ENCODE measurements at regions of chr1 and their contacts with region 1.

Region 1: DNA sequence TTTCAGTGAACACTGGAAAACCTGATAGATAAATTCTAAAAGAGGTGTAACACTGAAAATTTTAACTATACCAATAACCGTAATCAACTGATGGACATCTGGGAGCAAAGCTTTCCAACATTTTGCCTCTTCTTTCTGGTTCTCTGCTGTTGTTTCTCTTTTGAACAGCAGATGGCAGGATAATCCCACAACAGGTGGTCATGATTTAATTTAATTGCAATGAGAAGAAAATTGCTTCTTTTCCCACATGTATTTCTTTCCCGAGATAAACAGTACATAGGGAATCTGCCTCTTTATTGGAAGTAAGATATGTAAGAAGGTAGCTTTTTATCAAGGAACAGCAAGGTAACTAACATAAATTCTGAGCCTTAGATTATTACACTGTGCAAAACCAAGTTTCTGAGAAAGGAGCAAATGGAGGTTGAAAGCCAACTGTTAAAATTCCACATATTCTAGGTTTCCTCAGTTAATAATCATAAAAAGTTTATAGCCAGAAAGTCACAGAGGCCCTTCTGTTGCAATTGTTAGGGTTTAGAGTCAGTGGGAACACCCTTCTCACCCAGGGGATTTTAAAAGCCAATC is 72.9 kb downstream of the RPS6KA1 start:
- DNase-seq: peak; percentile 48
- H3K4me3 ChIP-seq: no peak overlapping the region
- H3K27ac ChIP-seq: no peak overlapping the region
- H3K4me1 ChIP-seq: no peaks in the 10 kb centered on the region
- H3K27me3 ChIP-seq: no peaks in the 10 kb centered on the region
- CTCF ChIP-seq: peak; percentile 81 to 82

Region 2: GRCh38 chr1:26677306-26678115 is 75.0 kb after region 1 on chr1:
- CTCF ChIA-PET with region 1: no interaction called
- dilution Hi-C with region 1: no loop called
- in situ Hi-C with region 1: no loop called
- intact Hi-C with region 1: loop called (anchors 1 kb)
- DNase-seq: peak; percentile 91
- H3K4me3 ChIP-seq: no peak overlapping the region
- H3K27ac ChIP-seq: no peak overlapping the region
- H3K4me1 ChIP-seq: peaks cover 4% of the 10 kb centered on the region
- H3K27me3 ChIP-seq: no peaks in the 10 kb centered on the region
- CTCF ChIP-seq: peak; percentile 77 to 90

Region 3: DNA sequence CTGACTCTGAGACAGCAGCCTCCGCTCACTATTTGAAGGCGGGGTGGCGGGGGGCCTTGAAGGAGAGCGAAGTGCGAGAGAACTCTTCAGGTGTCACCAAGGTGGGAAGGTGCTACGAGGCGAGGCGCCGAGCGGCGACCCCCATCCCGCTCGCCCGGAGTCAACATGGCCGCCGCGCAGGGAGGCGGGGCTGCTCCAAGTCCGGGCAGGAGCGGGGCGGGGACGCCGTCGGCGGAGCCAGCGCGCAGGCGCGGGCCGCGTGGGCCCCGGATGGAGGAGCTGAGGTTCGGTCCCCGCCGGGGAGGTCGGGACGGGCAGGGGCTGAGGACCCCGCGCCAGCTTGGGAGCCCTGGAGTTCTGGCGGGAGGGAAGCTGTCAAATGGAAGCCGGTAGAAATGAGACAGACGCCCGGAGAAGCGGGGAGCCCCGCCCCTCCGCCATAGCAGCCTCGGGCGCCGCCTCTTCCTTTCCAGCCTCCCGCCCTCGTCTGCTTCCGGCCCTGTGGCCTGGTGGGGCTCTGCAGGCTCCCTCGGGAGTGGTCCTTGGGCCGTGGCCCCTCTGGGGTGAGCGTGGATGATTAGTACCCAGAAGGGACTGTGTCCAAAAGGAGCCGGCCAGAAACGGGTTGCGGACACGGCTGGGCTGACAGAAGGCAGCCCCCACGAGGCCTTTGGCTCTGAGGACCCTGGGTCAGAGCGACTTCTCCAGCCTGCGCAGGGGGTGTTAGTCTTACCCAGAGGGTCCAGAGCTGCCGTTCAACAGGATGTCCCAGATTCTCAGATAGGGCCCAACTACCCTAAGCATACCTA is 185.4 kb after region 1 on chr1 and contains the start of gene PIGV:
- CTCF ChIA-PET with region 1: interaction called, 8 read pairs
- dilution Hi-C with region 1: loop called (anchors 5 kb)
- in situ Hi-C with region 1: loop called (anchors 5 to 10 kb)
- intact Hi-C with region 1: loop called (anchors 1 kb)
- DNase-seq: peak; percentile 78
- H3K4me3 ChIP-seq: peak within 1 kb of the TSS; percentile 61 to 80 (median 74)
- H3K27ac ChIP-seq: peak within 1 kb of the TSS; percentile 93
- H3K4me1 ChIP-seq: peaks cover 26% of the 10 kb centered on the region
- H3K27me3 ChIP-seq: no peaks in the 10 kb centered on the region
- CTCF ChIP-seq: peak in 1 of 2 donors; percentile 12
- total RNA-seq, gene PIGV: 18.0 to 19.2 TPM

Region 4: DNA sequence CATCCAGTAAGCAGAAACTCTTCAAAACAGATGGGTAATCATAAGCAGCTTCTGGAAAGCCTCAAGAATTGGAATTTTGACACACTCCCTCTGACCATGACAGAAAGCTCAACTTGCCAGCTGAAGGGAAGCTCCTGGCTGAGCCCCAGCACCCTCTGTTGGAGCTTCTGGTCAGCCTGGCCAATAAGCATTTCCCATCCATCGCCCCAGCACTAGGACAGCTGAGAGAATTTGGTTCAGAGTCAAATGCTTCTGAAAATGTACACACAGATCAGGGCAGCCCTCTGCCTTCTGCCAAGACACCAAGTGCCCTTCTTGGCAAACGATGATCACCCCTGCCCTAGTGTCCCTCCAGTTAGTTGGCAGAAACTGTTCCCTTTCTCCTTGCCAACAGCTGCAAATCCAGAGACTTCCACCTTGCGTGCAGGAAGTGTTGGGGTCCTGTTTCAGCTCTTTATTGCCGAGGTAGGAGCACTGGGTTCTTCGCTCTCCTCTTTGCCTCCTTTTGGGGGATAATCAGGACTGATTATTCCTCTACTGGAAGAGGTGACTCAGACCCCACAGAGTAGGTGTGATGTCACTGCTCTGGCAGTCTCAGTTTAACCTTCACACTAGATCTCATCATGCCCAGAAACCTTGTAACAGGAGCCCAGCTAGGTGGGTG is 197.1 kb after region 1 on chr1:
- CTCF ChIA-PET with region 1: no interaction called
- dilution Hi-C with region 1: no loop called
- in situ Hi-C with region 1: loop called in 1 of 2 experiments (anchors 10 kb)
- intact Hi-C with region 1: no loop called
- DNase-seq: peak; percentile 83
- H3K4me3 ChIP-seq: no peak overlapping the region
- H3K27ac ChIP-seq: no peak overlapping the region
- H3K4me1 ChIP-seq: peaks cover 12% of the 10 kb centered on the region
- H3K27me3 ChIP-seq: no peaks in the 10 kb centered on the region
- CTCF ChIP-seq: no peak

Region 5: DNA sequence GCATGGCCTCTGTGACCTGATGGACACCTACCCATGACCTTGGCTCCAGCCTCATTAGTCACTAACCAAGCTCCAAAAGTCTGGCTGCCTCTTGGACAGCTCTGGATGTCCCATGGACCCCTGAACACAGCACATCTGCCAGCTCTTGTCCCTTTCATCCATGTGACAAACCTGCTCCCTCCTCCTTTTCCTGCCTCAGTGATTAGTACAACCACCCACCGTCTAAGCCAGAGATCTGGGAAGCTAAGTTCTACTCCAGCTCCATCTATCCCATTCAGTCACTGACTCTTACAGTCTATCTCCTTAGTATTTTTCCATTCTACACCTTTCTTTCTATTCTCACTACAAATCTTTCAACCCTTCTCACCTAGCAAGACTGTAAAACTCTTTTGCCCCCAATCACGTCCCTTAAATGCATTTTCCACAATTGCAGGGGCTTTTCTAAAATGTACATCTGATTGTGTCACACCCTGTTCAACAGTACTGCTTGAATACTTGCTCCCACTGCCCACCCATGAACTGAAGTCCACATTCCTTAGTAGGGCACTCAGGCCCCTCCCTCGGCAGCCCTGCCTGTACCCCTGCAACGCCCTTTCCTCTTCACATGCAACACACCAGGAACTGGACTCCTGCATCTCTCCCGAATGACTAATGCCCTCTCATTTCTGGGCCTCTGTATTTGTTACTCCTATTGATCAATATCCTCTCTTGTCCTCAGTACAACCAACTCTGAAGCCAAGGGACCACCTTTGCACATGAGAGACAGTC is 280.4 kb after region 1 on chr1:
- CTCF ChIA-PET with region 1: interaction called, 4 read pairs
- dilution Hi-C with region 1: loop called (anchors 5 kb)
- in situ Hi-C with region 1: loop called in 1 of 2 experiments (anchors 10 kb)
- intact Hi-C with region 1: loop called (anchors 1 kb)
- DNase-seq: no peak
- H3K4me3 ChIP-seq: no peak overlapping the region
- H3K27ac ChIP-seq: no peak overlapping the region
- H3K4me1 ChIP-seq: peaks cover under 1% of the 10 kb centered on the region
- H3K27me3 ChIP-seq: no peaks in the 10 kb centered on the region
- CTCF ChIP-seq: no peak

Measured in mammary epithelial cell (primary cell).